Activated CD4-positive, alpha-beta T cell treated with anti-CD3 and anti-CD28 coated beads, Interleukin-2, amount 10 ng/mL, durations not matched to agents 7 days and 5 days (primary cell): ENCODE measurements at regions of chr16 and their contacts with region 1.

Region 1: GRCh38 chr16:13296206-13296605 is 394.8 kb downstream of the SHISA9 start:
- DNase-seq: no peak
- H3K4me3 Mint-ChIP-seq: no peak overlapping the region
- H3K27ac Mint-ChIP-seq: no peak overlapping the region
- H3K4me1 Mint-ChIP-seq: no peaks in the 10 kb centered on the region
- H3K27me3 Mint-ChIP-seq: no peaks in the 10 kb centered on the region

Region 2: DNA sequence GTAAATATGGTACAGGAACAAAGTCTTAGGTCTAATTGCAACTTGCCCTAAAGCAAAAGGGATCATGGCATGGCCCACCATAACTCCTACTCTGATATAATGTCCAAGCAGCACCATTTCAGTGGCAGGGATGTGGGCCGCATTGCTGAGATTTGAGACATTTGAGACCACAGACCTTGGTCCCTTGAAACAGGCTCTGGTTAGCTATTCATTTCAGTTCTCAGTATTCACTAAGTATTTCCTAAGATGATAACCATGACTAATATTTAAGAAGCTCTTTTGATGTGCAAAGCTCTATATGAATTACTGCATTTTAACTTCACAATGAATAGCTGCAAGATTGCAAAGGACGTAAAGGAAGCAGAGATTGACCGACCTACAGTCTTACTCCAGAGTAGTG is 76.2 kb after region 1 on chr16:
- CTCF ChIA-PET with region 1: no interaction called
- POLR2A ChIA-PET with region 1: no interaction called
- DNase-seq: no peak
- H3K4me3 Mint-ChIP-seq: no peak overlapping the region
- H3K27ac Mint-ChIP-seq: no peak overlapping the region
- H3K4me1 Mint-ChIP-seq: no peaks in the 10 kb centered on the region
- H3K27me3 Mint-ChIP-seq: no peaks in the 10 kb centered on the region

Region 3: DNA sequence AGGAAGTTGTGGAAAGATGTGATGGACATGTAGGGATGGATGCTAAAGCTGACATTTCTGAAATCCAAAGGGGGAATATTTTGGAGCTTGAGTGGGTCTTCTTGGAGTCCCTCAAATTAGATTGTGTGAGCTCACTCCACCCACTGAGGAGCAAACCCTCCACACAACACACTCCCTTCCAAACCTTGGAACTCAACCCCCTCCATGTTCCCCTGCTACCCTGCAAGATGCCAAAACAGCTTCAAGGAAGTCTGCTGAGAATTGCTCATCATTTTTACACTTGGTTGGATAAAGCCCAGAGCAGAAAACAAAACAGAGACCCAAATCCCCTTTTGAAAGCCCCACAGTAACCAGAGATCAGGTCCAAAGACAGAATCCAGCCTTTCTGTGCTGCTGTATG is 520.5 kb after region 1 on chr16:
- CTCF ChIA-PET with region 1: no interaction called
- POLR2A ChIA-PET with region 1: interaction called, 12 read pairs
- DNase-seq: no peak
- H3K4me3 Mint-ChIP-seq: no peak overlapping the region
- H3K27ac Mint-ChIP-seq: no peak overlapping the region
- H3K4me1 Mint-ChIP-seq: no peaks in the 10 kb centered on the region
- H3K27me3 Mint-ChIP-seq: no peaks in the 10 kb centered on the region